ENCODE measurements at regions of chr1 and their contacts with region 1.

Region 1: GRCh38 chr1:220391479-220391878 is 119.2 kb upstream of the RAB3GAP2 start:
- DNase-seq: peak; percentile 97
- H3K4me3 Mint-ChIP-seq: no peak overlapping the region
- H3K27ac Mint-ChIP-seq: no peak overlapping the region
- H3K4me1 Mint-ChIP-seq: peaks cover 33% of the 10 kb centered on the region
- H3K27me3 Mint-ChIP-seq: peaks cover 10% of the 10 kb centered on the region
- CTCF ChIP-seq: no peak

Region 2: GRCh38 chr1:220370031-220370700 is 21.3 kb before region 1 on chr1:
- CTCF ChIA-PET with region 1: interaction called, 5 read pairs
- POLR2A ChIA-PET with region 1: interaction called, 21 read pairs
- intact Hi-C with region 1: no loop called
- DNase-seq: peak; percentile 98
- H3K4me3 Mint-ChIP-seq: peak overlapping the region; percentile 6
- H3K27ac Mint-ChIP-seq: peak overlapping the region; percentile 65
- H3K4me1 Mint-ChIP-seq: peaks cover 28% of the 10 kb centered on the region
- H3K27me3 Mint-ChIP-seq: no peaks in the 10 kb centered on the region
- CTCF ChIP-seq: no peak

Measured in MCF 10A (cell line).